Heart right ventricle (tissue), 16 donors: ENCODE measurements at regions of chr12 and their contacts with region 1.

Region 1: GRCh38 chr12:2959505-2960389 is 550 bp downstream of the TEAD4 start:
- DNase-seq: peak; percentile 48 to 67
- ATAC-seq: peak; percentile 32 to 75 (median 40)
- H3K4me3 ChIP-seq: peak overlapping the region; percentile 35 to 74 (median 64)
- H3K27ac ChIP-seq: peak overlapping the region; percentile 78 to 94 (median 88)
- H3K4me1 ChIP-seq: peaks cover 3 to 55% (median 26%) of the 10 kb centered on the region in 9 donors
- H3K27me3 ChIP-seq: peaks cover 0 to 60% (median 0%) of the 10 kb centered on the region in 7 donors
- CTCF ChIP-seq: peak in 1 of 9 donors; percentile 12

Region 2: DNA sequence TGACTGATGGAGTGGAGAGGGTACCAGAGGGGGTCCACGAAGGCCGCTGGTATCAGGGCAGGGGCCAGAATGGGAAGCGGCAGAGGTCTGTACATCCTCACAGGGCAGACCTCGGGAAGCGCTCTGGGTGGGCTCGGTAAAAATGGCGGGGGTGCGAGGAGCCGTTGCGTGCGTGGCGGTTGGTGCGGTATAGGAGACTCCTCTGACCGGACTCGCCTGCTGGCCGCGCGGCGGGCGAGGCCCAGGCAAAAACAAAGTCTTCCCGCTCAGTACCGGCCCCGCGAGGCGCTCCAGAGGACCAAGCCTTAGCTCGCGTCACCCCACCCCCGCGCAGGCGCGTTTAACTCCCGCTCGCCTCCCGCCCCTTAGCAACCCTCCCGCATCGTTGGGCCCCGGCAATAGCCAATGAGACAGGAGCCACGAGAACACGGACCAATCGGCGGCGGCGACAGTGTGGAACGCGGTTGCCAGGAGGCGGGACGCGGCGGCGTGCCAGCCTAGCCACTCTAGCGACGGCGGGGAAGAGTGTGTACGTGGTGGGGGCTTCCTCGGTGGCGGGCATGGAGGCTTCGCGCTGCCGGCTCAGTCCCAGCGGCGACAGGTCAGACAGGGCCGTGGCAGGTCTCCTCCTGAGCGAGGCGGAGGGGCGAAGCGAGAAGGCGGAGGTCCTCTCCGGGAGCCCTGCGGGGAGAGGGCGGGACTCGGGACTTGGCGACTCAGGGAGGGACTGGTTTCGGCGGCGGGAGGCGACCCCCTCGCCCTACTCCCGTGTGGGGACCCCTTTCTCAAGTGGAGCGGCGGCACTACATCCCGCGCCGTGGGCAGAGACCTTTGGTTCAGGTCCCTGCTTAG is 69.1 kb before region 1 on chr12 and contains the start of gene TULP3:
- intact Hi-C with region 1: loop called in 1 of 10 experiments (anchors 2 kb)
- DNase-seq: peak; percentile 99
- ATAC-seq: peak; percentile 99
- H3K4me3 ChIP-seq: peak within 1 kb of the TSS; percentile 84 to 100 (median 95)
- H3K27ac ChIP-seq: peak within 1 kb of the TSS; percentile 83 to 96 (median 92)
- H3K4me1 ChIP-seq: peaks cover 0 to 30% (median 17%) of the 10 kb centered on the region in 9 donors
- H3K27me3 ChIP-seq: no peaks in the 10 kb centered on the region
- CTCF ChIP-seq: peak in 5 of 9 donors; percentile 6 to 39 (median 28)
- total RNA-seq, gene TULP3: 4.0 to 7.3 (median 4.6) TPM

Region 3: GRCh38 chr12:3122835-3123678 is 163.3 kb after region 1 on chr12:
- intact Hi-C with region 1: loop called in 1 of 10 experiments (anchors 5 kb)
- DNase-seq: peak; percentile 67 to 86
- ATAC-seq: peak; percentile 62 to 88 (median 76)
- H3K4me3 ChIP-seq: no peak overlapping the region
- H3K27ac ChIP-seq: peak overlapping the region; percentile 34 to 88 (median 76)
- H3K4me1 ChIP-seq: peaks cover 24 to 66% (median 58%) of the 10 kb centered on the region in 9 donors
- H3K27me3 ChIP-seq: peaks cover 0 to 18% (median 0%) of the 10 kb centered on the region in 7 donors
- CTCF ChIP-seq: peak; percentile 9 to 45 (median 21)